ENCODE measurements at regions of chr20 and their contacts with region 1.

Region 1: DNA sequence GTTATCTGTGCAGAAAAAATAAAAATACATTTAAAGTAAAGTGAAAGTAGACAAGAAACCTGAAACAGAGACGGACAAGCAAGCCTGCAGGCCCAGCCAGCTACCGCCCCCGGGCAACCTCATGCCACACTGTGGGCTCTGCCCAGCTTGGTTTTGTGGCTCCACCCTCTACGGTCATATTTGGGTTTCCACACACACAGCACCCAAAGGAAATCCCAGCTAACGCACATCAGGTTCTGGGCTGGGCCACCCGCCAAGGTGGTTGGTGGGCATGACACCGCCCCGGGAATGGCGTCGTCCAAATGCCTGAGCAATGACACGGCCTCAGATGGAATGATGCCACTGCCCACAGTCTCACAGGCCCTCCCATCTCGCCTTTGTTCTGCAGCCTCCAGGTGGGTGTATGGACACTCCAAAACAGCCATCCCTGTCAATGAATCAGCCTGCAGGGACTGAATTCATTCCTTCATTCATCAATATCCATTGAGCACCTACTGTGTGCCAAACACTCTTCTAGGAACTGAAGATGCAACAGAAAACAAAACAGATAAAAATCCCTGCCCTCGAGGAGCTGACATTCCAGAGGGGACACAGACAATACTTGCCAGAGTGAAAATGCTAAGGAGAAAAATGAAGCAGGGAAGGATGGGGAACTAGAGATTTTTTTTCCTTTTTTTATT is 23.0 kb downstream of the FAM110A start:
- DNase-seq: peak; percentile 64
- ATAC-seq: peak; percentile 58
- H3K4me3 Mint-ChIP-seq: peak overlapping the region; percentile 71
- H3K27ac Mint-ChIP-seq: peak overlapping the region; percentile 84
- H3K4me1 Mint-ChIP-seq: peaks cover 79% of the 10 kb centered on the region
- H3K27me3 Mint-ChIP-seq: no peaks in the 10 kb centered on the region

Region 2: DNA sequence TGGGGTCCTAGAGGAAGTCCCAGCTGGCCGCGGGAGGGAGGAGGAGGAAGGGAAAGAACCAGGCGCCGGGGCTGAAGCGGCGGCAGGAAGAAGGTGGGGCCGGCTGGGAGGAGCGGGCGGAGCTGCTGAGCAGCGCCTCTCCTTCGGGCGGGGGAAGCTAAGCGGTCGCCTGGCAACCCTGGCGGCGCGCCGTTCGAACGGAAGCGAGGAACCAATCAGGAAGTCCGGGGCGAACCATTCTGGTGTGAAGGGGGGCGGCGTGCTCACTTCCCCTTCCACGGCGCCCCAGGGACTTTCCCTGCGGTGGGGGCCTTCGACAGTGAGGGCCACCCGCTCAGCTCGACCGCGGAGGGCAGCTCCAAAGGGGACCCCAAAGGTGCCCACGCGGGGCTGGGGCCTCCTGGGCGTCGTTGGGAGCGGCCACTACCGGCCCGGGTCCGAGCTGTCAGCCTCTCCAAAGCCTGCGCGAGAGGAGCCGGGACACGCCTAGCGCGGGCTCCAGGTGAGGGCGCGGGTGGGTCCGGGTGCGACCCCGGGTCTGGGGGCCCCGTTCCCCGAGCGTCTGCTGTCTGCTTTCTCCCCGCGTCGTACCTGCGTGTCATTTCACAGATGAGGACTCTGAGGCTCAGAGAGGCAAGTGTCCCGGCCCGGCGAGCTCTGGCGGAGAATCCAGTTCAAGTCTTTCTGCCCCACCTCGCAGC is 22.9 kb before region 1 on chr20 and contains the start of gene FAM110A:
- POLR2A ChIA-PET with region 1: interaction called, 17 read pairs
- DNase-seq: peak; percentile 94
- ATAC-seq: peak; percentile 94
- H3K4me3 Mint-ChIP-seq: peak within 1 kb of the TSS; percentile 84
- H3K27ac Mint-ChIP-seq: peak within 1 kb of the TSS; percentile 77
- H3K4me1 Mint-ChIP-seq: peaks cover 30% of the 10 kb centered on the region
- H3K27me3 Mint-ChIP-seq: no peaks in the 10 kb centered on the region
- total RNA-seq, gene FAM110A: 44.5 to 50.6 TPM

Region 3: GRCh38 chr20:844473-845225 is 11.9 kb before region 1 on chr20:
- POLR2A ChIA-PET with region 1: interaction called, 18 read pairs
- DNase-seq: peak; percentile 75
- ATAC-seq: peak; percentile 82
- H3K4me3 Mint-ChIP-seq: peak overlapping the region; percentile 94
- H3K27ac Mint-ChIP-seq: peak overlapping the region; percentile 78
- H3K4me1 Mint-ChIP-seq: peaks cover 36% of the 10 kb centered on the region
- H3K27me3 Mint-ChIP-seq: no peaks in the 10 kb centered on the region

Measured in activated naive CD8-positive, alpha-beta T cell treated with anti-CD3 and anti-CD28 coated beads, Interleukin-2, amount 10 ng/mL, durations not matched to agents 7 days and 5 days (primary cell).